Heart right ventricle (tissue), 16 donors: ENCODE measurements at regions of chr9 and their contacts with region 1.

Region 1: DNA sequence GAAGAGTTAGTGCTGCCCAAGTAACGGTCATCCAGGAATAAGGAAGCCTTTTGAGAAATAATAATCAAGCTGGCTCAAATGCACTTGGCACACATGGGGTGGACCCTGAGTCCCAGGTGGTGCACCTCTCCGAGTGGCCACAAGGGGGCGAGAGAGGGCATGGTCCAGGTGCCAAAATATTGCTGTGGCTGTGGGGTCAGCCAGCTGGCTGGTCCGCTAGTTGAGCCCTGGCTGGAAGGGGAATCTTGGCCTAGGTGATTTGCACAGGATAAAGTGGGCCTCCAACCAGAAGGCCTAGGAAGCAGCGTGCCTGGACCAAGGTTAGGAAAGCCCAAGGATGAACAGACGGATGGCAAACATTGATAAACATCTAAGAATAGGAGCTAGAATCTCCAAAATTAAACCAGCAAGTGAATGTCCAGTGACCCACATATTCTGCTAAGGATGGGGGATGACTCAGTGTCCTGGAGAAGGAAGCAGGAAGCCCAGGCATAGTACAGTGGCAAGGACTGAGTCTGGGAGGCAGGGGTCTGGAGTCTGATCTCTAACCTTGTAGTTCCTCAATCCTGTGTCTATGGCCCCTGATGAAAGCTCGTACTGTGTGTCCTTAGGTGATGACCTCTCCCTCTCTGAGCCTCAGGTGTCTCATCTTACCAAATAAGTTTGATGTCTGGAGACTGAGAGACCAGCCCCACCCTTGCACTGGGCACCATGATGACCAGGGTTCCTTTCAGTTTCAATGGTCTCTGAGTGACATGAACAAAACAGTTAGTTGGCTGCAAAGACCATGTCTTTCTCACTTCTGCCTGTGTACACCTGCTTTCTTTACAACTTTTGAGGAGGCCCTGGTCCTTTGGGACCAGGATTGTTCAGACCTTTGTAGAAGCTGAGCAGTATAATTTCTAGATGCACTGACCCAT is 19.2 kb upstream of the SHB start:
- DNase-seq: peak; percentile 79 to 83
- ATAC-seq: peak; percentile 62 to 89 (median 85)
- H3K4me3 ChIP-seq: no peak overlapping the region
- H3K27ac ChIP-seq: no peak overlapping the region
- H3K4me1 ChIP-seq: peaks cover 0 to 27% (median 4%) of the 10 kb centered on the region in 9 donors
- H3K27me3 ChIP-seq: no peaks in the 10 kb centered on the region
- CTCF ChIP-seq: peak; percentile 93 to 99 (median 97)

Region 2: DNA sequence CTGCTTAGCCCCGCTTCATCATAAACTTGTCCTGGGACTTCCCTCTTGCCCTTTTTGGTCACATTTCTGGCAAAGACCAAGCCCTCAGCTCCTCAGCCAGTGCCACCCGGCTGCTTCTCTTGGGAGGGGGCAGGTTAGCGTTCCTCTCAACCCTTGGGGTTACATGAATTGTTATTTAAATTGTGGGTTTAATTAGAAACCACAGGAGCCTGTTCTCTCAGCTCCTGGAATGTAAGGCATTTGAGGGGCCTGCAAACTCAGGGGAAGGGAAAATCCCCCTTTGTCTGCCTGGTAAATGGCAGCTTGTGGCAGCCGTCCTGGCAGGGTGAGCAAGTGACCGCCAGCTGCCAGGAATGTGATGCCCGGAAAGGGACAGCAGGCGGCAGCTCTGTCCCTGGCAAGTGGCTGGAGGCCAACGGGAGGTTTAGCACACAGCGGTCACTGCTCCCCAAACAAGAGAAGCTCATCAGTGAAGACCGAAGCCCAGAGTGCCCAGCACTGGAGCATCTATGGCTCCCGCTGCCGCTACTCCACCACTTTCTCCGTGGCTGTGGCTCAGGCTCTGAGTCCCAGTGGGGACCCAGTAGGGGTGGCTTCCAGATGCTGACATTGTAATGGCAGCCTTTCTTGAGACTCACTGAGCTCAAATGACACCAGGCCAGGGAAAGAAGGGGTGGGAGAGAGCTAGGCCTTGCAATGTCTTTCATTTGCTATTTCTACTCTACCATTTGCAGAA is 70.9 kb before region 1 on chr9:
- intact Hi-C with region 1: loop called in 1 of 10 experiments (anchors 5 kb)
- DNase-seq: peak; percentile 68 to 73
- ATAC-seq: peak; percentile 63 to 87 (median 82)
- H3K4me3 ChIP-seq: no peak overlapping the region
- H3K27ac ChIP-seq: peak overlapping the region; percentile 12 to 88 (median 60)
- H3K4me1 ChIP-seq: peaks cover 33 to 79% (median 59%) of the 10 kb centered on the region in 9 donors
- H3K27me3 ChIP-seq: no peaks in the 10 kb centered on the region
- CTCF ChIP-seq: peak; percentile 27 to 61 (median 50)

Region 3: GRCh38 chr9:38154501-38155421 is 66.5 kb after region 1 on chr9:
- intact Hi-C with region 1: loop called in 7 of 10 experiments (anchors 2 to 10 kb)
- DNase-seq: no peak
- ATAC-seq: no peak
- H3K4me3 ChIP-seq: no peak overlapping the region
- H3K27ac ChIP-seq: no peak overlapping the region
- H3K4me1 ChIP-seq: no peaks in the 10 kb centered on the region
- H3K27me3 ChIP-seq: peaks cover 0 to 8% (median 0%) of the 10 kb centered on the region in 7 donors
- CTCF ChIP-seq: no peak

Region 4: DNA sequence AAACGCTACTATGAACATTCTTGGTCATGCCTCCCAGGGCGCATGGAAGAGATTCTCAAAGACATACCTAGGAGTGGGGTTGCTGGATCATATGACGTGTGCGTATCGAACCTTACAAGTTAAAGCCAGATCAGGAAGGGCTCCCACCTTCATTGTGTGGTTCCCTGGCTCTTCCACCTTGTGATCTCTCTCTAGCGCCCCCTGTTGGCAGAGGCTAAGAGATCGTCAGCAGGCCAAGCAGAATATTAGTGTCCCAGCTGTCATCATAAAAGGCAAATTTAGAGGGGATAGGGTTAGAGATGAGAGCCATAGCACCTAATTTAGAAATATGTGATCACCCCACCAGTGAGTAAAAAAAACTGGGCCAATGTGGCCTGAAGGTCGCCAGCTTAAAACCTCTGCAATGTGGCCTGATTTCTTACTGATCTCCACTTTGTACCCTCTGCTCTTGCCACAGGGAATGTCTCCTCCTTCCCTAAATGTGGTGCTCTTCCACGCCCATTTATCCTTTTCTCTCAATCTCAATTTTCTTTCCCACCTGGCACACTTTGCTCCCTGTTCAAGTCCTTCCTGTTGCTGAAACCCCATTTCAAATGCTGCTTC is 72.4 kb after region 1 on chr9:
- intact Hi-C with region 1: loop called in 8 of 10 experiments (anchors 2 to 10 kb)
- DNase-seq: peak; percentile 48 to 62
- ATAC-seq: peak in 6 of 8 donors; percentile 42 to 70 (median 62)
- H3K4me3 ChIP-seq: no peak overlapping the region
- H3K27ac ChIP-seq: no peak overlapping the region
- H3K4me1 ChIP-seq: no peaks in the 10 kb centered on the region
- H3K27me3 ChIP-seq: no peaks in the 10 kb centered on the region
- CTCF ChIP-seq: peak; percentile 78 to 88 (median 84)

Region 5: DNA sequence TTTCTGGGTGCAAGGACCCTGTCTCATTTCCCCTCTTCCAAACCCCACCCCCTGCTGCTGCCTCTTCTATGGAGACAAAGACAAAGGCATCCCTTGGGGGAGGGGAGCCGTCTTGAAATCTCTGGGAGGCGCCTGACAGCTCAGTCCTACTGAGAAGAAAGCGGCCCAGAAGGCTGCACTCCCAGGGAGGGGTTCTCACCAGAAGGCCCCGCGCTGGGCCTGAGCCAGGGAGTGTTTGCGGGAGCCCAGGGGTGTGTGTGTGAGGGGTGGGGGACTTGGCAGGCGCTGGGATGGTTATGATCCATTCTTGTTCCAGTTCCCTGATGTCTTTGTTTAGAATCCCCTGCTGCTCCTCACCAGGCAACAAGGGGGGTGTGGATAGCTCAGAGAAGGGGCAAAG is 258.5 kb after region 1 on chr9:
- intact Hi-C with region 1: loop called in 3 of 10 experiments (anchors 5 to 10 kb)
- DNase-seq: no peak
- ATAC-seq: no peak
- H3K4me3 ChIP-seq: no peak overlapping the region
- H3K27ac ChIP-seq: no peak overlapping the region
- H3K4me1 ChIP-seq: no peaks in the 10 kb centered on the region
- H3K27me3 ChIP-seq: peaks cover 0 to 15% (median 3%) of the 10 kb centered on the region in 7 donors
- CTCF ChIP-seq: no peak

Region 6: GRCh38 chr9:38362852-38363593 is 274.8 kb after region 1 on chr9:
- intact Hi-C with region 1: loop called in 4 of 10 experiments (anchors 5 to 10 kb)
- DNase-seq: peak in 1 of 2 donors; percentile 41
- ATAC-seq: peak; percentile 70 to 88 (median 82)
- H3K4me3 ChIP-seq: peak overlapping the region in 1 of 10 donors; percentile 3
- H3K27ac ChIP-seq: no peak overlapping the region
- H3K4me1 ChIP-seq: peaks cover 0 to 7% (median 0%) of the 10 kb centered on the region in 9 donors
- H3K27me3 ChIP-seq: no peaks in the 10 kb centered on the region
- CTCF ChIP-seq: peak; percentile 14 to 77 (median 65)

Region 7: DNA sequence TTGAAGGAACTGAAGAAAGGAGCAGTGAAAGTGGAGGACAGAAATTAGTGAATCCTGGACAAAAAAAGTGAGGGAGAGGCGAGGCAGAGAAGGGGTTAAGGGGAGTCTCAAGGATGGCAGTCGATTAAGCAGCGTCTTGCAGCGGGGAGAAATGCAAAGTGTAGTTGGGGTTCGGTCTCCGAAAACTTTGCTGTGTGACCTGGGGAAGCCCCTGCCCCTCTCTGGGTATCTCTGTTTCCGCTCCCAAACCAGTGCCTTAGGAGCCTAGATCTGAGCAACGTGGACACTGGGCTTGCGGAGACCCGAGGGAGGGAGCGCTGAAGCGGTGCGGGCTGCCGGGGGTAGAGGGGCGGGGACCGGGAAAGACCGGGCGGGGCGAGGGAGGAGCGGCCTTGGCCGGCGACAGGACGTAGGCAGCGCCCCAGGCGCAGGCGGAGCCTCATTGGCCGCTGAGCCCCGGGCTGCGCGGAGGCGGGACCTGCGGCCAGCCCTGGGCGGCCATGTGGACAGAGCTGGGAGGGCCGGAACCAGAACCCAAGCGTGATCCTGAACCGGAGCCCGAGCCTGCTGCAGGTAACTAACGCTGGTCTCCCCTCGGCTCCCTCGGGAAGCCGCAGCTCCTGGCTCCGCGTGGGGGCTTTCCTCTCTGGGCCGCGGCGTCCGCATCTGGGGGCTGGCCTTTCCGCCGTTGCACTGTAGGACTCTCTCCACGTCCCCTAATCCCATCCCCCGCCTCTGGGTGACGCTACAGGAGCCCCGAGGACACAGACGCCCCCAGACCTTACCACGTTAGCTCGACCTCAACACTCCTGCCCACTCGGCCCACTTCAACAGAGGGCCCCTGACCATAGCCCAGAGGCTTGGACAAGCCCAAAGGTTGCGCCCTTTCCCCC is 304.2 kb after region 1 on chr9 and contains the start of gene ALDH1B1:
- intact Hi-C with region 1: loop called in 1 of 10 experiments (anchors 5 kb)
- DNase-seq: peak; percentile 80 to 87
- ATAC-seq: peak; percentile 98 to 99 (median 99)
- H3K4me3 ChIP-seq: peak within 1 kb of the TSS; percentile 54 to 89 (median 76)
- H3K27ac ChIP-seq: peak within 1 kb of the TSS in 8 of 10 donors; percentile 11 to 79 (median 54)
- H3K4me1 ChIP-seq: peaks cover 0 to 28% (median 15%) of the 10 kb centered on the region in 9 donors
- H3K27me3 ChIP-seq: peaks cover 0 to 3% (median 0%) of the 10 kb centered on the region in 7 donors
- CTCF ChIP-seq: peak in 5 of 9 donors; percentile 8 to 27 (median 22)
- total RNA-seq, gene ALDH1B1: 12.1 to 30.2 (median 18.9) TPM